A673 (cell line): ENCODE measurements at regions of chr1 and their contacts with region 1.

Region 1: DNA sequence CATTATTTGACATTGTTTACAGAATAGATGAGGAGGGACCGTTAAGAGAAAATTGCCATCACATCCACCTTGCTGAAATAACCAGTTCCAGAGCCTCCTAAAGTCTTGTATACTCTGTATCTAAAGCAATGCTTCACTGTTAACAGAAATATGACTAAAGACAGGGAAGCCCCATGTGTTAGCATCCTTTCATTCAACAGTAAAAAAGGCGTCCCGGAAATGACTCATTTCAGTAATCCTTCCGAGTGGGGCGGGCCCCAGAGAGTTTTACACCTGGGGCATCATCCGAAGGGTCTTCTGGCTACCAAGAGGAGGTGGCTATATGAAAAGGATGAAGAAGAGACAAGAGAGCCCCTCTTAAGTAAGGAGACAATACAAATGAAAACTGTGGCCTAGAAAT is 227.2 kb downstream of the SLC45A1 start:
- DNase-seq: peak; percentile 91
- H3K4me3 ChIP-seq: no peak overlapping the region
- H3K27ac ChIP-seq: peak overlapping the region; percentile 20
- H3K4me1 ChIP-seq: peaks cover 28% of the 10 kb centered on the region
- H3K27me3 ChIP-seq: no peaks in the 10 kb centered on the region
- CTCF ChIP-seq: no peak

Region 2: DNA sequence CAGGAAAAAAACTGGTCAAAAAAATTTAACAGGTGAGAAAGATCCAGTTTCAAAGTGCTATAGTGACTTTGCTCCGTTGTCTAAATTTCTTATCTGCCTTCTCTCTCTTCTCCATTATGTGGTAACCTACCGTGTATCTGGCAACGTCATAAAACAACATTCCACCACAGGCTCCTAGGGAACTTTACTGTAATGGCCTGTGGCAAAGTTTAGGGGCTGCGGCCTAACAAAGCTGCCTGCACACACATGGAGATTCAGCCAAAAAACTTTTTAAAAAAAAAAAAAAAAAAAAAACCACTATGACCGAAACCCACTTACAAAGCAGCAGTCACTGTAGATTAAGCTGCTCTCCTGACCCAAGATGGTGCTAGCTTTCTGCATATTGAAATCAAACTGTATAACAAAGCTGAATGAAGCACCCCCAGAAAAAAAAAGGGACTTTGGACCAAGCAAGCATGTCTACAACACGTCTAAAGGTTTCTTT is 24.6 kb before region 1 on chr1:
- CTCF ChIA-PET with region 1: no interaction called
- POLR2A ChIA-PET with region 1: interaction called, 11 read pairs
- intact Hi-C with region 1: no loop called
- DNase-seq: no peak
- H3K4me3 ChIP-seq: no peak overlapping the region
- H3K27ac ChIP-seq: no peak overlapping the region
- H3K4me1 ChIP-seq: peaks cover 46% of the 10 kb centered on the region
- H3K27me3 ChIP-seq: no peaks in the 10 kb centered on the region
- CTCF ChIP-seq: no peak